Uterus (tissue), 4 donors: ENCODE measurements at regions of chr1 and their contacts with region 1.

Region 1: GRCh38 chr1:27109103-27109822 is 45.7 kb downstream of the SLC9A1 start:
- DNase-seq: no peak
- H3K4me3 ChIP-seq: no peak overlapping the region
- H3K27ac ChIP-seq: no peak overlapping the region
- H3K4me1 ChIP-seq: peaks cover 4% of the 10 kb centered on the region in 2 donors
- H3K27me3 ChIP-seq: no peaks in the 10 kb centered on the region
- CTCF ChIP-seq: no peak
- POLR2A ChIP-seq: no peak

Region 2: DNA sequence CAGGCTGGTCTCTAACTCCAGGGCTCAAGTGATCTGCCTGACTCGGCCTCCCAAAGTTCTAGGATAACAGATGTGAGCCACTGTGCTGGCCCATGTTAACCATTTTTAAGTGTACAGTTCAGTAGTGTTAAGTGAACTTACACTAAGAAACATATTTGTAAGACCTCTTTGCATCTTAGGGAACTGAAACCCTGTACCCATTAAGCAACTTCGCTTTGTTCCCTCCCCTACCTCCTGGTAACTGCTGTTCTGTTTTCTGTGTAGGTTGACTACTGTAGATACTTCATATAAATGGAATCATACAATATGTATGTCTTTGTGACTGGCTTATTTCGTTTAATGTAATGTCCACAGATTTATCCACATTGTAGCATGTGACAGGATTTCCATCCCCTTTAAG is 176.7 kb before region 1 on chr1:
- intact Hi-C with region 1: no loop called
- DNase-seq: no peak
- H3K4me3 ChIP-seq: no peak overlapping the region
- H3K27ac ChIP-seq: no peak overlapping the region
- H3K4me1 ChIP-seq: no peaks in the 10 kb centered on the region
- H3K27me3 ChIP-seq: no peaks in the 10 kb centered on the region
- CTCF ChIP-seq: no peak
- POLR2A ChIP-seq: no peak

Region 3: DNA sequence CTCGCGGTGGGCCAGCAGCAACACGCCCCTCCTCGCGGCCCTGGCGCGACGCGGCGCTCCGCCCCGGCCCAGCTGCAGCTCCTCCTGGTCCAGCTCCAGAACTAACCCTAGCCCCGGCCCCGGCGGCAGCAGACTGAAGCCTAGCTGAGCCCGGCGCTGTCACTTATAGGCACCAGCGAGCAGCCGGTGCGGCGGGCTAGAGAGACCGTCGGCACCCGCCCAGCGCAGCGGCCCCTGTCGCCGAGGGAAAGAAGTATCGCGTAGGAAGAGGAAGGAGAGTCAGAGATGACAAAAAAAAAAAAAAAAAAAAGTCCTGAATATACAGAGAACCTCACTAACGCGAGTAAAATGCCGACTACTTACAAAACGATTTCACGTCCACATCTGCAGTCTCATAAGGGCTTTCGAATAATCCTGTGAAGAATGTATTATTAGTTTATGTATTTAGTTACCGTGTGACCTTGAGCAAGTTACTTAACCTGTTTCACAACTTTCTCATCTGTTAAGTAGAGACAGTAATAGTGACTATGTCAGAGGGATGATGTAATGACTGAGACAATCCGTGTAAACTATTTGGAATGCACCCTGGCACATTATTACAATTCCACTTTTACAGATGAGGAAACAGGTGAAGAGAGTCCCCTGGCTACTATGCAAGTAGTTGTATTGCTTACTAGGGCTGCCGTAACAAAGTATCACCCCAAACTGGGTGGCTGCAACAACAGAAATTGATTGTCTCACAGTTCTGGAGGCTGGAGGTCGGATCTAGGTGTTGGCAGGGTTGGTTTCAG is 45.9 kb after region 1 on chr1 and contains the start of gene SLC9A1:
- intact Hi-C with region 1: loop called (anchors 5 kb)
- DNase-seq: peak; percentile 94 to 96
- H3K4me3 ChIP-seq: peak within 1 kb of the TSS; percentile 46 to 92
- H3K27ac ChIP-seq: peak within 1 kb of the TSS; percentile 84 to 95
- H3K4me1 ChIP-seq: no peaks in the 10 kb centered on the region
- H3K27me3 ChIP-seq: no peaks in the 10 kb centered on the region
- CTCF ChIP-seq: peak; percentile 74 to 87 (median 80)
- POLR2A ChIP-seq: peak; percentile 93 to 99
- total RNA-seq, gene SLC9A1: 3.1 to 33.6 (median 18.4) TPM

Region 4: GRCh38 chr1:27253596-27253995 is 144.3 kb after region 1 on chr1:
- intact Hi-C with region 1: no loop called
- DNase-seq: no peak
- H3K4me3 ChIP-seq: no peak overlapping the region
- H3K27ac ChIP-seq: no peak overlapping the region
- H3K4me1 ChIP-seq: no peaks in the 10 kb centered on the region
- H3K27me3 ChIP-seq: no peaks in the 10 kb centered on the region
- CTCF ChIP-seq: no peak
- POLR2A ChIP-seq: no peak